HepG2 (cell line): ENCODE measurements at regions of chr17 and their contacts with region 1.

Region 1: GRCh38 chr17:48892940-48893645 is 506 bp downstream of the ATP5MC1 start:
- DNase-seq: no peak
- ATAC-seq: peak; percentile 12
- H3K4me3 ChIP-seq: peak overlapping the region; percentile 76 to 97 (median 81)
- H3K27ac ChIP-seq: peak overlapping the region; percentile 84
- H3K4me1 ChIP-seq: peaks cover 52% of the 10 kb centered on the region
- H3K27me3 ChIP-seq: no peaks in the 10 kb centered on the region; a peak in 1 of 5 replicates
- CTCF ChIP-seq: 0 out of 2 replicates have a peak, but pooled peaks have one; percentile 2
- EP300 ChIP-seq: no peak
- POLR2A ChIP-seq: peak in 1 of 2 experiments; percentile 0; a peak in 1 of 4 replicates
- RAD21 ChIP-seq: peak; percentile 69

Region 2: DNA sequence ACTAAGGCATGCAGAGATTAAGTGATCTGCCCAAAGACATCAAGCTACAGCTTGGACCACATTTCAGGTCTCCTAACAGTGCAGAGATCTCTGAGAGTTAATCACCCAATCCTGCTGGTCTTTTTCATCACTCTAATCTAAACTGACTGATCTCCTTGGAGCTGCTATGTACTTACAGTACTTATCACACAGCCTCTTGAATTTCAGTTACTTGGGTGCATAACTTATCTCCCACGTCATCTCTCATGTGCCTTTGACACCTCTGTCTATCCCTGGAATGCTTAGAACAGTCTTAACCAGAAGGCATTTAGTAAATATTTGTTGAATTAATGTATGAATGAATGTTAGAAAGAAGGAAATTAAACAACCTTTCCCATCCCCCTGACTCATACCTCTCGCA is 646.5 kb before region 1 on chr17:
- CTCF ChIA-PET with region 1: no interaction called
- POLR2A ChIA-PET with region 1: no interaction called
- in situ Hi-C with region 1: no loop called
- intact Hi-C with region 1: no loop called
- DNase-seq: no peak
- ATAC-seq: no peak
- H3K4me3 ChIP-seq: no peak overlapping the region
- H3K27ac ChIP-seq: no peak overlapping the region
- H3K4me1 ChIP-seq: no peaks in the 10 kb centered on the region
- H3K27me3 ChIP-seq: peaks cover 0 to 15% of the 10 kb centered on the region in 2 experiments; a peak in 2 of 5 replicates
- CTCF ChIP-seq: no peak
- EP300 ChIP-seq: no peak
- POLR2A ChIP-seq: no peak
- RAD21 ChIP-seq: no peak

Region 3: GRCh38 chr17:48791128-48792032 is 101.7 kb before region 1 on chr17:
- CTCF ChIA-PET with region 1: no interaction called
- POLR2A ChIA-PET with region 1: interaction called, 24 read pairs
- in situ Hi-C with region 1: no loop called
- intact Hi-C with region 1: no loop called
- DNase-seq: peak; percentile 80
- ATAC-seq: peak; percentile 71
- H3K4me3 ChIP-seq: peak overlapping the region; percentile 34 to 70 (median 58)
- H3K27ac ChIP-seq: no peak overlapping the region
- H3K4me1 ChIP-seq: peaks cover 61% of the 10 kb centered on the region
- H3K27me3 ChIP-seq: peaks cover 1 to 11% of the 10 kb centered on the region in 2 experiments; a peak in 2 of 5 replicates
- CTCF ChIP-seq: peak; percentile 93
- EP300 ChIP-seq: no peak
- POLR2A ChIP-seq: no peak
- RAD21 ChIP-seq: peak; percentile 71

Region 4: GRCh38 chr17:48878918-48879898 is 13.9 kb before region 1 on chr17:
- CTCF ChIA-PET with region 1: no interaction called
- POLR2A ChIA-PET with region 1: interaction called, 34 read pairs
- in situ Hi-C with region 1: no loop called
- intact Hi-C with region 1: no loop called
- DNase-seq: peak; percentile 80
- ATAC-seq: peak; percentile 83
- H3K4me3 ChIP-seq: no peak overlapping the region
- H3K27ac ChIP-seq: no peak overlapping the region
- H3K4me1 ChIP-seq: peaks cover 20% of the 10 kb centered on the region
- H3K27me3 ChIP-seq: peaks cover 0 to 9% of the 10 kb centered on the region in 2 experiments; a peak in 3 of 5 replicates
- CTCF ChIP-seq: peak; percentile 97
- EP300 ChIP-seq: no peak
- POLR2A ChIP-seq: no peak
- RAD21 ChIP-seq: peak; percentile 98

Region 5: DNA sequence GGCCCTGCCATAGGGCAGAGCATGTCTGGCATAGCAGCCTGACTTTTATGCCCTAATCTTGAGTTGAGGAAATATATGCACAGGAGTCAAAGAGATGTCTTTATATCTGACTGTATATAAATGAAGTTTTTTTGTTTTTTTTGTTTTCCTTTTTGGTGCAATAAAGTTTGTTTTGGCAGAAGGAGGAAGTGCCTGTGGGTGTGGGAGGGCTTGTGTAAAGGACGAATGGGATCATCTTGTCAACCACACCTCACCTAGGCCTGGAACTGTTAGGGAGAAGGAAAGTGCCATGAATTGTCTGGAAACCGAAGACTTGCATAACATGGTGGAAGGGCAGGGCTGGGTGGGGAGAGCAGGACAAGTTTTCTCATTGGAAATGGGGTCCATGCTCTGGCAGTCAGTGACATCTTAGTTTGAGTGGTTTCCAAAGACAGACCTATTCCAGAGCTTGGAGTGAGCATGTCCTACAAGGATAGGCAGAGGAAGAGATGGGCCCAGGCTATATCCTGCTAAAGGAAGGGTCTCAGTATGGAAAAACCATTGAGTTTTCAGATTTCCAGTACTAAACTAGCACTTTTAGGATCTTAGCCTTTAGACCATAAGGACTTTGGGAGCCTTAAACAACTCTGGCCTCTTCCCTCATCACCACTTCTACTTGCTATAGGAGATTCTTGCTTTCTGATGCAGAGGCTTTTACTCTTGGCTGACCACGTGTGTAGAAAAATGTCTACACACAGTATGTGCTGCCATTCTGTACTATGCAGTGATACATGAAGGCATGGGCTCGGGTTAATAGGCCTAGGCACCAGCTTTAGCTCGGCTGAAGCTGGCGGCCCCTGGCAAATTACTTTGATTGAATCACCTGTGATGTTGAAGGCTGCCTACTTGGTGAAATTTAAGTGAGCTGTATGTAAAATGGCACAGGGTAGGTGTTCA is 36.1 kb after region 1 on chr17:
- CTCF ChIA-PET with region 1: no interaction called
- POLR2A ChIA-PET with region 1: interaction called, 22 read pairs
- in situ Hi-C with region 1: no loop called
- intact Hi-C with region 1: no loop called
- DNase-seq: no peak
- ATAC-seq: no peak; the same call in 2 of the 3 replicates
- H3K4me3 ChIP-seq: no peak overlapping the region
- H3K27ac ChIP-seq: no peak overlapping the region
- H3K4me1 ChIP-seq: peaks cover 21% of the 10 kb centered on the region
- H3K27me3 ChIP-seq: no peaks in the 10 kb centered on the region
- CTCF ChIP-seq: no peak
- EP300 ChIP-seq: no peak
- POLR2A ChIP-seq: peak; percentile 15 to 36; a peak in 2 of 4 replicates
- RAD21 ChIP-seq: no peak

Region 6: DNA sequence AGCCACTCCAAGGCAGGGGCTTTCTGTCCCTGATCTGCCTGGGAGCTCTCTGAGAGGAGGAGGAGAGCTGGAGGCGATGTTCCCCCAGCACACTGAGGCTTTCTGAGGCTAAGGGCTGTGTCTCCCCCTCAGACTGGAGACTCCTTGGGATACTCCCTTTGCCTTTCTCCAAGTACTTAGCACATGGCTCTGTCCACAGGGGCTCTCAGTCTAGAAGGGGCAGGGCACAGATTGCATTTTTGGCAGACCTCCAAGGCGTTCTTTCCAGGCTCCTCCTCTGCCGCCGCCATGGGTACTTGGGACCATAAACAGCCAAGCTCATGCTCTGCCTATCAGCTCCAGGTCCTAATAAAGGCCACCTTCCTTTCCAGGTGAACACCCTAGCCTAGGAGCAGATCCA is 77.1 kb after region 1 on chr17:
- CTCF ChIA-PET with region 1: no interaction called
- POLR2A ChIA-PET with region 1: interaction called, 21 read pairs
- in situ Hi-C with region 1: no loop called
- intact Hi-C with region 1: no loop called
- DNase-seq: no peak
- ATAC-seq: no peak
- H3K4me3 ChIP-seq: no peak overlapping the region
- H3K27ac ChIP-seq: peak overlapping the region; percentile 79
- H3K4me1 ChIP-seq: peaks cover 56% of the 10 kb centered on the region
- H3K27me3 ChIP-seq: no peaks in the 10 kb centered on the region
- CTCF ChIP-seq: no peak
- EP300 ChIP-seq: no peak
- POLR2A ChIP-seq: no peak
- RAD21 ChIP-seq: no peak

Region 7: DNA sequence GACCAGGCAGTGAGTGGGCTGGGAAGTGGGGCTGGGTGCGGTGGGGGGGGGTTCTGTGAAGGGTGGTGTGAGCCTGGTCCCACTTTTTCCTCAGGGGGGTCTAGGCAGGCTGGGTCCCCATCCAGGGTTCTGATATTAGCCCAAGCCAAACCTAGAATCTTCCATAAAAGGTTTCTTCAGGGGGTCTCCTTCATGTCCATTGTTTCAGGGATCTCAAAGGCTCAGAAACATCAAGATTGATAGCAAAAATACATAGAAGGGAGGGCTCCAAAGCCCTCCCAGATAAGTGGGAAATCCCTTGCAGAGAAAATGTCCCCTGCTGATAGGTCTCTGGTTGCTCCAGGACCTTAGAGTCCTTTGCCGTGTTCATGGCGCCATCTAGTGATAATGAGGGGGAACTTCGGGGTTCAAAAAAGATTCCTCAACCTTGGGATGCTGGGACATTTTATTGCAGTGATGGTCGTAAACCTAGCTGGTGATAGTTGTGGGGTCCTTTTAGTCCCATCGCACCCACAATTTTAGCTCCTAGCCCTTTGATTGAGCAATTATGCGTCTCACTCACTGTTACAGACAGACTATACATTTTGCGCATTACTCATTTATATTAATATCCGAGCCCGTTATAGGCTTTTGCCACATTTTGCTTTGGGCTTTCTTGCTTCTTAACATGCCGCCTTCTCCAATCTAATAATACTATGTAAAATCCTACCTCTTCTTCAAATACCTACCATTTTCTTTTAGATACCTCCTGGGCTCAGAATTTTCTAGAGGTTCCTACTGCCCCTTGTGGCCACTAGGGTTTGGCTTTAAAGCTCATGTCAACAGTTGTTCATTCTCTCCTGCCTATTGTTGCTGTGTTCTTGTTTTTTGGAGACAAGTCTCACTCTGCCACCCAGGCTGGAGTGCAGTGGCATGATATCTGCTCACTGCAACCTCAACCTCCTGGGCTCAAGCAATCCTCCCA is 139.2 kb after region 1 on chr17:
- CTCF ChIA-PET with region 1: no interaction called
- POLR2A ChIA-PET with region 1: interaction called, 15 read pairs
- in situ Hi-C with region 1: no loop called
- intact Hi-C with region 1: loop called (anchors 2 kb)
- DNase-seq: peak; percentile 86
- ATAC-seq: peak; percentile 80
- H3K4me3 ChIP-seq: no peak overlapping the region
- H3K27ac ChIP-seq: no peak overlapping the region
- H3K4me1 ChIP-seq: no peaks in the 10 kb centered on the region
- H3K27me3 ChIP-seq: no peaks in the 10 kb centered on the region
- CTCF ChIP-seq: peak; percentile 92
- EP300 ChIP-seq: no peak
- POLR2A ChIP-seq: no peak
- RAD21 ChIP-seq: peak; percentile 98